MCF 10A (cell line): ENCODE measurements at regions of chr3 and their contacts with region 1.

Region 1: GRCh38 chr3:194003125-194004057 is 132.6 kb upstream of the HES1 start:
- DNase-seq: peak; percentile 96
- H3K4me3 Mint-ChIP-seq: peak overlapping the region; percentile 67
- H3K27ac Mint-ChIP-seq: peak overlapping the region; percentile 69
- H3K4me1 Mint-ChIP-seq: peaks cover 22% of the 10 kb centered on the region
- H3K27me3 Mint-ChIP-seq: no peaks in the 10 kb centered on the region
- CTCF ChIP-seq: no peak

Region 2: DNA sequence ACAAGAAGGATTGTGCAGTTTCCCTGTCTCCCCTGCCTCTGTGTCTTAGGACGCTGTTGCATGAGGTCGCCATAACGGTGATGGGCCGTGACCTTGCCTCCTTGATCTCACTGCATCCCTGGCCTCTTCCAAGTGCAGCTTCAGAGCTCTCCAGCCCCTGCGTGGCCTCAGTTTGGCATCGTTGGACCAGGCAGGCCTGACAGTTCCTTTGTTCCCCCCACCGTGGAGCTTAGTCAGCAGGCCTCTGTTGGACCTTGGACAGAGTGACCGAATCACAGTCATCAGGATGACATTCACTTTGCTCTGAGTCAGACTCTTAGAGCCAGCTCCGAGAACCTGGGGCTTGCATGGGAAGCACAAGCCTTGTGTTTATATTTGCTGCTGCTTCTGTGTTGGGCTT is 271.0 kb before region 1 on chr3:
- CTCF ChIA-PET with region 1: no interaction called
- POLR2A ChIA-PET with region 1: no interaction called
- intact Hi-C with region 1: no loop called
- DNase-seq: peak; percentile 36
- H3K4me3 Mint-ChIP-seq: no peak overlapping the region
- H3K27ac Mint-ChIP-seq: no peak overlapping the region
- H3K4me1 Mint-ChIP-seq: no peaks in the 10 kb centered on the region
- H3K27me3 Mint-ChIP-seq: no peaks in the 10 kb centered on the region
- CTCF ChIP-seq: no peak

Region 3: DNA sequence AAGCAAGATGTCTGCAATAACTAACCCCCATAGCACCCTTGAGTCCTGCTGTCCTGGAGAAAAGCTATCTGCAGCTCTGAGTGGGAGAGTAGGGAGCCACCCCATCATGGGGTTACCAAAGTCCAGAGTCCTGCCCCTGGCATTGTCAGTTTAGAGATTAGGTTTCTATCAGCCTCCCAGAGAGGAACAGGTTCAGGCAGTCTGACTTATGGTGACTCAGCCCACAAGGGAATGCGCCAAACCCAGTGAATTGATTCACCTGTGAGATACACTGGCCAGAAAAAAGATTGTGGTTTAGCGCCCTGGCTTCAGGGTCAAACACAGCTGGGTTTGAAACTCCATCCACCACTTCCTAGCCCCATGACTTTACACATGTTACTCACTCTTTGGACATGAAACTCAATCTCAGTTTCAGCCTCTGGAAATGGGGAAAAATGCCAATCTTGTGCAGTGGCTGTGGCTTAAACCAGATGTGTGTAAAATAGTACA is 131.1 kb before region 1 on chr3:
- CTCF ChIA-PET with region 1: interaction called, 4 read pairs
- POLR2A ChIA-PET with region 1: interaction called, 34 read pairs
- intact Hi-C with region 1: loop called (anchors 1 kb)
- DNase-seq: peak; percentile 99
- H3K4me3 Mint-ChIP-seq: no peak overlapping the region
- H3K27ac Mint-ChIP-seq: peak overlapping the region; percentile 27
- H3K4me1 Mint-ChIP-seq: peaks cover 68% of the 10 kb centered on the region
- H3K27me3 Mint-ChIP-seq: peaks cover 12% of the 10 kb centered on the region
- CTCF ChIP-seq: no peak

Region 4: DNA sequence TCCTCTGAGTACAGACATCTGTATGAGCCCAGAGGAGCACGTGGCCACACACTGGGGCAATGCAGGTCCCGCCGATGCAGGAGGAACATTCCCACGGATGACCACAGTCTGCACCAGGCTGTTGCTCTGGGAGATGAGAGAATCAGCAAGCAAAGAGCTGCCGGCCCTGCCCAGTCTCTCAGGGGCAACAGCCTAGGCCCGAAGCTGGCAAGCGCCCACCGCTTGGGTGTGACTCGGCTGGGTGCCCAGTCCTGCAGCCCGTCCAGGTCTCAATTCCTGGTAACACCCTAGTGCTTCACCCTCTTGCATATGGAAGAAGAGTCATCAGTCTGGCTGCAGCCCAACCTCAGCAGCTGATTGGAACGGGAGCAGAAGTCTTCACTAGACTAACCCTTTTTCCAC is 21.1 kb before region 1 on chr3:
- CTCF ChIA-PET with region 1: interaction called, 3 read pairs
- POLR2A ChIA-PET with region 1: interaction called, 15 read pairs
- intact Hi-C with region 1: loop called (anchors 1 kb)
- DNase-seq: peak; percentile 98
- H3K4me3 Mint-ChIP-seq: no peak overlapping the region
- H3K27ac Mint-ChIP-seq: peak overlapping the region; percentile 63
- H3K4me1 Mint-ChIP-seq: peaks cover 38% of the 10 kb centered on the region
- H3K27me3 Mint-ChIP-seq: peaks cover 7% of the 10 kb centered on the region
- CTCF ChIP-seq: no peak

Region 5: GRCh38 chr3:194089357-194090177 is 86.2 kb after region 1 on chr3:
- CTCF ChIA-PET with region 1: no interaction called
- POLR2A ChIA-PET with region 1: interaction called, 22 read pairs
- intact Hi-C with region 1: loop called (anchors 5 kb)
- DNase-seq: peak; percentile 100
- H3K4me3 Mint-ChIP-seq: peak overlapping the region; percentile 57
- H3K27ac Mint-ChIP-seq: peak overlapping the region; percentile 89
- H3K4me1 Mint-ChIP-seq: peaks cover 25% of the 10 kb centered on the region
- H3K27me3 Mint-ChIP-seq: no peaks in the 10 kb centered on the region
- CTCF ChIP-seq: no peak

Region 6: DNA sequence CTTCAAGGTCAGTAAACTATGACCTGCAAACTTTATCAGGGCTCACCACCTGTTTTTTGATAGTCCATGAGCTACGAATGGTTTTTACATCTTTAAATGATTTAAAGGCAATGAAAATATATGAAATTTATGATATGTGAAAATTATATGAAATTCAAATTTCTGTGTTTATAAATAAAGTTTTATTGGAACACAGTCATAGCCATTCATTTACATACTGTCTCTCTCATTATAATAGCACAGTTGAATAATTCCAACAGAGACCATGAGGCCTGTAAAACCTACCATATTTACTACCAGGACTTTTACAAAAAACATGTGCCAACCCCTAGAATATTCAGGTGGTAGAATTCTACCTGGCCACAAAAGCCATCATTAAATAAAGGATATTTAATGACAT is 1331.6 kb after region 1 on chr3:
- CTCF ChIA-PET with region 1: no interaction called
- POLR2A ChIA-PET with region 1: no interaction called
- intact Hi-C with region 1: no loop called
- DNase-seq: no peak
- H3K4me3 Mint-ChIP-seq: no peak overlapping the region
- H3K27ac Mint-ChIP-seq: no peak overlapping the region
- H3K4me1 Mint-ChIP-seq: no peaks in the 10 kb centered on the region
- H3K27me3 Mint-ChIP-seq: no peaks in the 10 kb centered on the region
- CTCF ChIP-seq: no peak